ENCODE measurements at regions of chr7 and their contacts with region 1.

Region 1: DNA sequence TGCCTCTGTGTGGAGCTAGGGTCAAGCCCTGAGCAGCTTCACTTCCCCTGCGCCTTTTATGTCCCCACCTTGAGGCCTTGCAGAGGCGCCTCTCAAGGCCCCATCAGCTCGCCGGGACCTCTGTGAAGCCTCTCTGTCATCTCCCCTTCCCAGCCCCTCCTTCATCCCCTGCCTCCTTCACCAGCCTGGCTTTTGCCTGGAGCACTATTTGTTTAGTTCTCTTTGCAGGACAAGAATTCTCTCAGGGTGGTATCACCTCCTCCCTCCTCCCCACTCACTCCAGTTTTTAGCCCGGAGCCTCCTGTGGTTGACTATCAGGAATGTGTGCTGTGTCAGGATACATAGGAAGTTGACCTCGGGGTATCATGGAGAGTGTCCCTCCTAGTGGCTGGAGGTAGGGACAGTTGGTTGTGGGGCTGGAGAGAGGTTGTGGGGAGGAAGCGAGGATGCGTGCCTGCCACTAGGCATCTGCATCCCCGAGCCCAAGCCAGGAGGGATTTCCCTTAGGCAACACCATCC is 89.8 kb upstream of the ANLN start:
- DNase-seq: no peak
- ATAC-seq: no peak
- H3K4me3 ChIP-seq: no peak overlapping the region
- H3K27ac ChIP-seq: no peak overlapping the region
- H3K4me1 ChIP-seq: peaks cover 29% of the 10 kb centered on the region
- H3K27me3 ChIP-seq: no peaks in the 10 kb centered on the region
- CTCF ChIP-seq: no peak

Region 2: DNA sequence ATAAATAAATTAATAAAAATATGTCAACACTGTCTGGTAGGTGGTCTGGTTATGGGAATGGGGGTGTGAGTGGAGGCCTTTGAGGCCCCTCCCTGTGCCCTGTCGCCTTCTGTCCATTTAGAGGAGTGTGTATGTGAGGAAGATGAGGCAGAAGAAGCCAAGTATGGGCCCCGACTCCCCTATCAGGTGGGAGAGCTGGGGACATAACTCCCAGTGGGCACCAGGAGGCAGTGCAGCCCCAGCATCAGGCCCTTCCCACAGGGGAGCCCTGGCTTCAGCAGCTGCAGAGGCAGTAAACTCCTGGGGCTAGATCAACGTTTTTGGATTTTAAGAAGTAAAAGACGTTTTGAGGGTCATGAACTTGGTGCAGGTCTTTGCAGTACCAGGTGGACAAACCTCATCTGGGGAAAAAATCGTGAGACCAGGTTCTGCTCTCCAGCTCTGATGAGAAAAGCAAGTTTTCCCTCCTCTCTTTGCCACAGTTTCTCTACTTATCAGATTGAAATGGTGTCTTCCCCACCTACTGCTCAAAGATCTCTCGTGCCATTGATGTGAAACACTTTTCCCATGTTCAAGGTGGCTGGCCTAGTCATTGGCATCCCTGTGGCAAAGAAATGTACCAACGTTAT is 314.6 kb before region 1 on chr7:
- intact Hi-C with region 1: loop called (anchors 5 kb)
- DNase-seq: peak; percentile 89
- ATAC-seq: peak; percentile 96
- H3K4me3 ChIP-seq: no peak overlapping the region
- H3K27ac ChIP-seq: no peak overlapping the region
- H3K4me1 ChIP-seq: no peaks in the 10 kb centered on the region
- H3K27me3 ChIP-seq: no peaks in the 10 kb centered on the region
- CTCF ChIP-seq: peak; percentile 95

Region 3: DNA sequence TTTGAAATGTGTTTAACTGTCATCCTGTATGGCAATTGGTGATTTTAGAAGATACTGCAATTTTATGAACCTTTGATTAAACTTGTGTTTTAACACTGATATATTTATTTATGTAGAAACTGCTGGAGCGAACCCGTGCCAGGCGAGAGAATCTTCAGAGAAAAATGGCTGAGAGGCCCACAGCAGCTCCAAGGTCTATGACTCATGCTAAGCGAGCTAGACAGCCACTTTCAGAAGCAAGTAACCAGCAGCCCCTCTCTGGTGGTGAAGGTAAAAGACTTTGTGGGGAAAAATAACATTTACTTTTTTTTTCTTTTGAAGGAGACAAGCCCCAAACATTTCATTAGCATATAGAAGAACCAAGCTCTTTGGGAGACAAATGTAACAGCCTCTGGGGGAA is 96.3 kb after region 1 on chr7:
- intact Hi-C with region 1: no loop called
- DNase-seq: no peak
- ATAC-seq: no peak
- H3K4me3 ChIP-seq: no peak overlapping the region
- H3K27ac ChIP-seq: no peak overlapping the region
- H3K4me1 ChIP-seq: peaks cover 7% of the 10 kb centered on the region
- H3K27me3 ChIP-seq: no peaks in the 10 kb centered on the region
- CTCF ChIP-seq: no peak

Measured in upper lobe of right lung (tissue), 1 donor.